Panc1 (cell line): ENCODE measurements at regions of chr14 and their contacts with region 1.

Region 1: GRCh38 chr14:102811251-102811881 is 34.1 kb downstream of the TRAF3 start:
- DNase-seq: no peak
- ATAC-seq: no peak
- H3K4me3 ChIP-seq: no peak overlapping the region
- H3K27ac ChIP-seq: no peak overlapping the region
- H3K4me1 ChIP-seq: peaks cover 9% of the 10 kb centered on the region
- H3K27me3 ChIP-seq: no peaks in the 10 kb centered on the region
- CTCF ChIP-seq: no peak

Region 2: GRCh38 chr14:102777711-102778337 is 33.5 kb before region 1 on chr14:
- CTCF ChIA-PET with region 1: no interaction called
- POLR2A ChIA-PET with region 1: no interaction called
- in situ Hi-C with region 1: no loop called
- intact Hi-C with region 1: no loop called
- DNase-seq: no peak
- ATAC-seq: peak; percentile 58
- H3K4me3 ChIP-seq: peak overlapping the region; percentile 74 to 86
- H3K27ac ChIP-seq: peak overlapping the region; percentile 86
- H3K4me1 ChIP-seq: peaks cover 15% of the 10 kb centered on the region
- H3K27me3 ChIP-seq: no peaks in the 10 kb centered on the region
- CTCF ChIP-seq: no peak

Region 3: DNA sequence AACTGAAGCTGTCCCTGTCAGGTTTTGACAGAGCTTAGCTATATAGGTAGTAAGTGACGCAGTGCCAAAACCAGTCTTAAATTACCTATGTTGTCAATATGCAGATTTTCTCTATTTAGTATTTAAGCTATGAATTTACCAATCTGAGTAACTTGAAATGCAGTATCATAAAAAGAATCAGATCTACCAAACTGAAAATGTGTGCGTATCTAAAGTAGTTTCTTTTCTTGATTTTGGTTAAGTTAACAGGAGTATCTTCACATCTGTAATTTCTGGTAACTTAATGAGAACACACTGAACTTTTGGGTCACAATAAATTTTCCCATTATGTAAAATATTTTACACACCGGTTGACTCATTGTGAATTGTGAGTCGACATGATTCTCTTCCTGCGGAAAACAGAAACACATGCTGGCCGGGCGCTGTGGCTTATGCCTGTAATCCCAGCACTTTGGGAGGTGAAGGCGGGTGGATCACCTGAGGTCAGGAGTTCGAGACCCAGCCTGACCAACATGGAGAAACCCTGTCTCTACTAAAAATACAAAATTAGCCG is 11.0 kb after region 1 on chr14:
- CTCF ChIA-PET with region 1: no interaction called
- POLR2A ChIA-PET with region 1: interaction called, 10 read pairs
- in situ Hi-C with region 1: no loop called
- intact Hi-C with region 1: no loop called
- DNase-seq: no peak
- ATAC-seq: no peak
- H3K4me3 ChIP-seq: no peak overlapping the region
- H3K27ac ChIP-seq: no peak overlapping the region
- H3K4me1 ChIP-seq: peaks cover 22% of the 10 kb centered on the region
- H3K27me3 ChIP-seq: no peaks in the 10 kb centered on the region
- CTCF ChIP-seq: no peak